A549 (cell line): ENCODE measurements at regions of chr4 and their contacts with region 1.

Region 1: GRCh38 chr4:6019316-6020263 is 1.4 kb upstream of the C4orf50 start:
- DNase-seq: peak; percentile 44 to 51
- ATAC-seq: peak; percentile 74 to 91; a peak in 3 of 6 replicates
- H3K4me3 ChIP-seq: no peak overlapping the region
- H3K27ac ChIP-seq: no peak overlapping the region
- H3K4me1 ChIP-seq: no peaks in the 10 kb centered on the region
- CTCF ChIP-seq: peak; percentile 64
- EP300 ChIP-seq: no peak
- POLR2A ChIP-seq: no peak
- RAD21 ChIP-seq: peak; percentile 20 to 51; a peak in 3 of 5 replicates

Region 2: GRCh38 chr4:5881340-5881739 is 138.2 kb before region 1 on chr4:
- CTCF ChIA-PET with region 1: no interaction called
- POLR2A ChIA-PET with region 1: no interaction called
- DNase-seq: no peak
- ATAC-seq: no peak
- H3K4me3 ChIP-seq: no peak overlapping the region
- H3K27ac ChIP-seq: no peak overlapping the region
- H3K4me1 ChIP-seq: no peaks in the 10 kb centered on the region
- CTCF ChIP-seq: no peak
- EP300 ChIP-seq: no peak
- POLR2A ChIP-seq: no peak
- RAD21 ChIP-seq: no peak

Region 3: GRCh38 chr4:5921101-5921980 is 98.2 kb before region 1 on chr4:
- CTCF ChIA-PET with region 1: no interaction called
- POLR2A ChIA-PET with region 1: no interaction called
- DNase-seq: no peak
- ATAC-seq: no peak
- H3K4me3 ChIP-seq: no peak overlapping the region
- H3K27ac ChIP-seq: no peak overlapping the region
- H3K4me1 ChIP-seq: no peaks in the 10 kb centered on the region
- CTCF ChIP-seq: no peak
- EP300 ChIP-seq: no peak
- POLR2A ChIP-seq: no peak
- RAD21 ChIP-seq: no peak

Region 4: DNA sequence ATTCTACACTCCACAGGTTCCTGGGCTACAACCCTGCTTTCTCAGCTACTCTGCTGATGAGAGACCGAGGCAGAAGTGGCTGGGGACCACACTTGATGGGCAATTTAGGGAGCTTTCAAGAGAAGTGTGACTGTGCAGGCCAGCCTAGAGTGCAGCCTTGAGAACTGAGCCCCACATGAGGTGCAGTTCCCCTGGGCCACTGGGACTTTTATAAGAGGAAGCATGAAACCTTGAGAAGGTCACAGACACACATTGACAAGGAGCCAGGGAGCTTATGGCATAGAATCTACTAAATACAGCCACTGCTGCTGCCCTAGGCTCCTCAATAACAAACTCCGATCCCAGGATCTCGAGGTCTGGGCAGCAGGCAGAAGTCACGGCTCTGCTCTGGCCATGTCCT is 14.4 kb before region 1 on chr4:
- CTCF ChIA-PET with region 1: interaction called, 19 read pairs
- POLR2A ChIA-PET with region 1: no interaction called
- DNase-seq: no peak
- ATAC-seq: no peak
- H3K4me3 ChIP-seq: no peak overlapping the region
- H3K27ac ChIP-seq: no peak overlapping the region
- H3K4me1 ChIP-seq: no peaks in the 10 kb centered on the region
- CTCF ChIP-seq: no peak
- EP300 ChIP-seq: no peak
- POLR2A ChIP-seq: no peak
- RAD21 ChIP-seq: no peak

Region 5: GRCh38 chr4:6044805-6045204 is 25.2 kb after region 1 on chr4:
- CTCF ChIA-PET with region 1: no interaction called
- POLR2A ChIA-PET with region 1: no interaction called
- DNase-seq: no peak
- ATAC-seq: no peak
- H3K4me3 ChIP-seq: no peak overlapping the region
- H3K27ac ChIP-seq: no peak overlapping the region
- H3K4me1 ChIP-seq: no peaks in the 10 kb centered on the region
- CTCF ChIP-seq: no peak
- EP300 ChIP-seq: no peak
- POLR2A ChIP-seq: no peak
- RAD21 ChIP-seq: no peak